ENCODE measurements at regions of chr4 and their contacts with region 1.

Region 1: GRCh38 chr4:183580370-183580769 is 75.5 kb downstream of the ING2 start:
- DNase-seq: no peak
- ATAC-seq: no peak
- H3K4me3 ChIP-seq: no peak overlapping the region
- H3K27ac ChIP-seq: no peak overlapping the region
- H3K4me1 ChIP-seq: no peaks in the 10 kb centered on the region
- H3K27me3 ChIP-seq: no peaks in the 10 kb centered on the region
- CTCF ChIP-seq: no peak

Region 2: GRCh38 chr4:183392377-183392776 is 188.0 kb before region 1 on chr4:
- intact Hi-C with region 1: no loop called
- DNase-seq: no peak
- ATAC-seq: no peak
- H3K4me3 ChIP-seq: no peak overlapping the region
- H3K27ac ChIP-seq: no peak overlapping the region
- H3K4me1 ChIP-seq: peaks cover 0 to 41% (median 0%) of the 10 kb centered on the region in 9 donors
- H3K27me3 ChIP-seq: peaks cover 0 to 39% (median 14%) of the 10 kb centered on the region in 7 donors
- CTCF ChIP-seq: no peak

Region 3: DNA sequence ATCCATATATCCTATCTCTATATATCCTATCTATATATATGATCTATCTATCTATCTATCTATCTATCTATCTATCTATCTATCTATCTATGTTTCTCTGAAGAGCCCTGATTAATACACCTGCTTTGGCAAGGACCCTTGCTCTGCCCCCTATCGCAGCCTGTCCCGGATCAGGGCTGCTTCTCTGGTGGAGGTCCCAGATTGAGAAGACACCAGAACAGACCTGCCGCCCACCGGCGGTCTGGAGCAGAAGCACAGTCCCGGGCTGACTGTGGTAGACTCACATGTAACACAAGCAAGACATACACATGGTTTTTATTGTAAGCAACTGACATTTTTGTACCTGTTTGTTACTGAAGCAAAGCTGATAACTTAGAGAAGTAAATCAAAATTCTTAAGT is 22.8 kb before region 1 on chr4:
- intact Hi-C with region 1: loop called in 1 of 10 experiments (anchors 2 kb)
- DNase-seq: no peak
- ATAC-seq: no peak
- H3K4me3 ChIP-seq: no peak overlapping the region
- H3K27ac ChIP-seq: no peak overlapping the region
- H3K4me1 ChIP-seq: no peaks in the 10 kb centered on the region
- H3K27me3 ChIP-seq: peaks cover 0 to 5% (median 0%) of the 10 kb centered on the region in 7 donors
- CTCF ChIP-seq: no peak

Region 4: GRCh38 chr4:183636923-183637322 is 56.6 kb after region 1 on chr4:
- intact Hi-C with region 1: no loop called
- DNase-seq: no peak
- ATAC-seq: peak in 4 of 8 donors; percentile 28 to 76 (median 46)
- H3K4me3 ChIP-seq: no peak overlapping the region
- H3K27ac ChIP-seq: peak overlapping the region in 3 of 10 donors; percentile 41 to 58 (median 48)
- H3K4me1 ChIP-seq: peaks cover 0 to 25% (median 3%) of the 10 kb centered on the region in 9 donors
- H3K27me3 ChIP-seq: no peaks in the 10 kb centered on the region
- CTCF ChIP-seq: no peak

Region 5: DNA sequence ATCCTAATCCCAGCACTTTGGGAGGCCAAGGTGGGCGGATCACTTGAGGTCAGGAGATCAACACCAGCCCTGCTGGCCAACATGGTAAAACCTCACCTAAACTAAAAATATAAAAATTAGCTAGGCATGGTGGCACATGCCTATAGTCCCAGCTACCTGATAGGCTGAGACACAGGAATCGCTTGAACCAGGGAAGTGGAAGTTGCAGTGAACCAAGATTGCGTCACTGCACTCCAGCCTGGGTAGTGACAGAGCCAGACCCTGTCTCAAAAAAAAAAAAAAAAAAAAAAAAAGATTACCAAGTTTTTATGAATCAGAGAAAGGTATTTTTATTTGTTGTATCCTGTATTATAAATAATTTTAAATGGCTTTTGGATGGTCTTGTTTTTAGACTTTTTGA is 93.8 kb after region 1 on chr4:
- intact Hi-C with region 1: no loop called
- DNase-seq: no peak
- ATAC-seq: no peak
- H3K4me3 ChIP-seq: no peak overlapping the region
- H3K27ac ChIP-seq: no peak overlapping the region
- H3K4me1 ChIP-seq: no peaks in the 10 kb centered on the region
- H3K27me3 ChIP-seq: no peaks in the 10 kb centered on the region
- CTCF ChIP-seq: no peak

Region 6: GRCh38 chr4:183686461-183686860 is 106.1 kb after region 1 on chr4:
- intact Hi-C with region 1: no loop called
- DNase-seq: no peak
- ATAC-seq: no peak
- H3K4me3 ChIP-seq: no peak overlapping the region
- H3K27ac ChIP-seq: no peak overlapping the region
- H3K4me1 ChIP-seq: no peaks in the 10 kb centered on the region
- H3K27me3 ChIP-seq: no peaks in the 10 kb centered on the region
- CTCF ChIP-seq: no peak